ENCODE measurements at regions of chrX and their contacts with region 1.

Region 1: GRCh38 chrX:77556276-77556675 is 109.1 kb downstream of the FGF16 start:
- DNase-seq: no peak
- ATAC-seq: no peak
- H3K4me3 ChIP-seq: no peak overlapping the region
- H3K27ac ChIP-seq: no peak overlapping the region
- H3K4me1 ChIP-seq: no peaks in the 10 kb centered on the region
- H3K27me3 ChIP-seq: no peaks in the 10 kb centered on the region
- CTCF ChIP-seq: no peak
- EP300 ChIP-seq: no peak
- POLR2A ChIP-seq: no peak
- RAD21 ChIP-seq: no peak

Region 2: DNA sequence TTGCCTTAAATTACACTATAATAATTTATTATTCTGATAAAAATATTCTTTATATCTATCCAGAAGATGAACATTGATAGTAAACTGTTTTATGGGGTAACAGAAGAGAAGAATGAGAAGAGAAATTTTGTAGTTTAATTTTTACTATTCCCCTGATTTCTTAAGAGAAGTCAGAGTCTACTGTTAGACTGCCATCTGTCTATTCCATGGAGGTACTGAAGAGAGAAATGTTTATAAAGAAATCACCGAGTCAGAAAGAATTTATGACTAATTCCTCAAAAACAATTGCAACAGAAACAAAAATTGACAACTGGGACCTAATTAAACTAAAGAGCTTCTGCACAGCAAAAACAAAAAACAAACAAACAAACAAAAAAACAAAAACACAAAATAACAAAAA is 40.8 kb after region 1 on chrX:
- CTCF ChIA-PET with region 1: no interaction called
- POLR2A ChIA-PET with region 1: no interaction called
- RAD21 ChIA-PET with region 1: no interaction called
- SMC1A ChIA-PET with region 1: no interaction called
- in situ Hi-C with region 1: no loop called
- intact Hi-C with region 1: no loop called
- DNase-seq: no peak
- ATAC-seq: peak; percentile 58
- H3K4me3 ChIP-seq: no peak overlapping the region
- H3K27ac ChIP-seq: no peak overlapping the region
- H3K4me1 ChIP-seq: no peaks in the 10 kb centered on the region
- H3K27me3 ChIP-seq: no peaks in the 10 kb centered on the region
- CTCF ChIP-seq: no peak; a peak in 1 of 6 replicates
- EP300 ChIP-seq: no peak
- POLR2A ChIP-seq: no peak
- RAD21 ChIP-seq: peak; percentile 22; the same call in 1 of the 2 replicates

Region 3: GRCh38 chrX:77617206-77617605 is 60.9 kb after region 1 on chrX:
- CTCF ChIA-PET with region 1: no interaction called
- POLR2A ChIA-PET with region 1: no interaction called
- RAD21 ChIA-PET with region 1: no interaction called
- SMC1A ChIA-PET with region 1: no interaction called
- in situ Hi-C with region 1: no loop called
- intact Hi-C with region 1: loop called (anchors 10 kb)
- DNase-seq: no peak
- ATAC-seq: no peak
- H3K4me3 ChIP-seq: no peak overlapping the region
- H3K27ac ChIP-seq: no peak overlapping the region
- H3K4me1 ChIP-seq: no peaks in the 10 kb centered on the region
- H3K27me3 ChIP-seq: no peaks in the 10 kb centered on the region
- CTCF ChIP-seq: no peak
- EP300 ChIP-seq: no peak
- POLR2A ChIP-seq: no peak
- RAD21 ChIP-seq: no peak